ENCODE measurements at regions of chr3 and their contacts with region 1.

Region 1: GRCh38 chr3:72185549-72186399 is 400.8 kb upstream of the PROK2 start:
- DNase-seq: no peak
- ATAC-seq: peak; percentile 92
- H3K4me3 Mint-ChIP-seq: peak overlapping the region; percentile 2
- H3K27ac Mint-ChIP-seq: no peak overlapping the region
- H3K4me1 Mint-ChIP-seq: peaks cover 40% of the 10 kb centered on the region
- H3K27me3 Mint-ChIP-seq: no peaks in the 10 kb centered on the region
- CTCF ChIP-seq: no peak

Region 2: DNA sequence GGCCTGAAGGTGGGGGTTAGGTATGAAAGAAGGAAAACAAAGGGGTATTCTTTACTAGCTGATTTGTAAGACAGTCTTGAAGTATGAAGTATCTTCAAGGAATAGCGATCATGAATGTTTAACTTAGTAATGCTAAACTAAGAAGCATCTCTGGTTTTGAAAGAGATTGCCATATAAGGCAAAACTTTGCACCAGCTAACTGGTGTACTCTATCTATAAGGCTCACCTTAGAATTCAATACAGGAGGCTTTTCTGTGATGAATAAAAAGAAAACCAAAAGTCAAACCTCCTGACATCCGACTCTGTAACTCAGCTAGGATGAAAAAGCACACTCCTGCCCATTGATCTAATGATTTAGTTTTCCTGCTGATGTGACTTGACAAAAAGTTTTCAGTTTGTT is 657.0 kb before region 1 on chr3:
- CTCF ChIA-PET with region 1: no interaction called
- POLR2A ChIA-PET with region 1: no interaction called
- intact Hi-C with region 1: no loop called
- DNase-seq: no peak
- ATAC-seq: no peak
- H3K4me3 Mint-ChIP-seq: no peak overlapping the region
- H3K27ac Mint-ChIP-seq: no peak overlapping the region
- H3K4me1 Mint-ChIP-seq: peaks cover 40% of the 10 kb centered on the region
- H3K27me3 Mint-ChIP-seq: peaks cover 2% of the 10 kb centered on the region
- CTCF ChIP-seq: no peak

Region 3: GRCh38 chr3:72234391-72234790 is 48.6 kb after region 1 on chr3:
- CTCF ChIA-PET with region 1: no interaction called
- POLR2A ChIA-PET with region 1: no interaction called
- intact Hi-C with region 1: loop called (anchors 10 kb)
- DNase-seq: no peak
- ATAC-seq: no peak
- H3K4me3 Mint-ChIP-seq: no peak overlapping the region
- H3K27ac Mint-ChIP-seq: no peak overlapping the region
- H3K4me1 Mint-ChIP-seq: peaks cover 14% of the 10 kb centered on the region
- H3K27me3 Mint-ChIP-seq: peaks cover 10% of the 10 kb centered on the region
- CTCF ChIP-seq: no peak

Region 4: DNA sequence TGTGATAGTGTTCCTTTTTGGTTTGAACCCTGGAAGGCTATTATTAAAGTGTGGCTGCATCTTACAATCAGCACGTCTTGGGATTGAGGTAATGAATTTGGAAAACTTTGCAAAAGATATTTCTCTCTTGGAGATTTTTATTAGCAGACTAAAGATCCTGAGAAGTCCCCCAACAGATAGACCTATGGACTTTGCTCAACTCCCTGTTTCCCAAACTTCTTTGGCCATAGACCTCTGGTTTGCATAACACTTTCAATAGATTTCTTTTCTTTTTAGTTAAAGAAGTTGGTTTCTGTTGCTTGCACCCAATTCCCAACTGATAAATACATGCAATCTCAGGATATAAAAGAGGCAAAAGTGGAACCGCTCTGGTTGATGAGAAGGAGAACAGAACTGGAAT is 65.0 kb after region 1 on chr3:
- CTCF ChIA-PET with region 1: no interaction called
- POLR2A ChIA-PET with region 1: no interaction called
- intact Hi-C with region 1: loop called (anchors 5 kb)
- DNase-seq: no peak
- ATAC-seq: no peak
- H3K4me3 Mint-ChIP-seq: no peak overlapping the region
- H3K27ac Mint-ChIP-seq: no peak overlapping the region
- H3K4me1 Mint-ChIP-seq: peaks cover 11% of the 10 kb centered on the region
- H3K27me3 Mint-ChIP-seq: peaks cover 3% of the 10 kb centered on the region
- CTCF ChIP-seq: no peak

Measured in activated B cell treated with CpG ODN at 0.5 μM for 24 hours (primary cell).